Heart left ventricle (tissue), 16 donors: ENCODE measurements at regions of chr18 and their contacts with region 1.

Region 1: DNA sequence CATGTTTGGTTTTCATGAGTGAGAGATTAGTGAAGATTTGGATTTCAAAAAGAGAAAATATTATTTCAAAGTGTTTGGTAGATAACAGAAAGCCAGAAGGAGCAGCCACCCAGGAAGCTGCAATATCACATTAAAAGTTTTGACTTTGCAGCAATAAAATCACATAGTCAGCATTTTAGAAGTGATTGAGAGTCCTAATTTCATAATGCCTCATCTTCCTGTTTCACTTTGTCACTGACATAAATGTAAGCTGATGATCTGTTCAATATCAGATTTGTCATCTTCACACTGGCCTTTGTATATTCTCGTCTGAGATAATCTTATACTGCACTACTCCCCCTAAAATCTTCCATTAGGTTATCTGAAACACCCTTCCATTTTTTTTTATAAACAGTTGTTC is 690.5 kb downstream of the ADCYAP1 start:
- DNase-seq: no peak
- ATAC-seq: no peak
- H3K4me3 ChIP-seq: no peak overlapping the region
- H3K27ac ChIP-seq: no peak overlapping the region
- H3K4me1 ChIP-seq: no peaks in the 10 kb centered on the region
- H3K27me3 ChIP-seq: no peaks in the 10 kb centered on the region
- CTCF ChIP-seq: no peak
- POLR2A ChIP-seq: no peak

Region 2: GRCh38 chr18:1526991-1527390 is 68.2 kb before region 1 on chr18:
- intact Hi-C with region 1: no loop called
- DNase-seq: no peak
- ATAC-seq: no peak
- H3K4me3 ChIP-seq: no peak overlapping the region
- H3K27ac ChIP-seq: no peak overlapping the region
- H3K4me1 ChIP-seq: no peaks in the 10 kb centered on the region
- H3K27me3 ChIP-seq: no peaks in the 10 kb centered on the region
- CTCF ChIP-seq: no peak
- POLR2A ChIP-seq: no peak

Region 3: GRCh38 chr18:1663879-1664705 is 68.9 kb after region 1 on chr18:
- intact Hi-C with region 1: loop called in 1 of 10 experiments (anchors 10 kb)
- DNase-seq: peak; percentile 22 to 70 (median 37)
- ATAC-seq: peak in 2 of 4 donors; percentile 13 to 53
- H3K4me3 ChIP-seq: no peak overlapping the region
- H3K27ac ChIP-seq: peak overlapping the region in 1 of 12 donors; percentile 31
- H3K4me1 ChIP-seq: peaks cover 0 to 4% (median 0%) of the 10 kb centered on the region in 12 donors
- H3K27me3 ChIP-seq: no peaks in the 10 kb centered on the region
- CTCF ChIP-seq: peak in 11 of 12 donors; percentile 12 to 66 (median 44)
- POLR2A ChIP-seq: no peak

Region 4: DNA sequence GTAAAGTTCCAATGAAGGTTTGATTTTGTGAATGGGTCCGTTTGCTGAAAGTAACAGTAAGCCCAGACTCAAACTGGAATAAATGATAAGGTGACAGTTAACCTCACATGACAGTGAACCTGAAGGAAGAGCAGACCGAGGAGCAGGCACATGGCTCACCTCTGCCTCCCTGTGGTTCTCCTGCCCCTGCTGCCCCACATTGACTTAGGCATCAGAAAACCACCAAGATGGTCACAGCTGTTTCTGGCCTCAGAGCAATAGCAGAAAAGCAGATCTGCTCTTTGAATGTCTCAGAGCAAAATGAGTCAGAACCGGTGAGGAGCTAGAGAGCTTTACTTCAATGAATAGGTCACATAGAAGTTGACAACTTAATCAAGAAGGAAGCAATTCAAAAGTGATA is 488.5 kb after region 1 on chr18:
- intact Hi-C with region 1: loop called in 1 of 10 experiments (anchors 5 kb)
- DNase-seq: no peak
- ATAC-seq: no peak
- H3K4me3 ChIP-seq: no peak overlapping the region
- H3K27ac ChIP-seq: no peak overlapping the region
- H3K4me1 ChIP-seq: peaks cover 0 to 8% (median 0%) of the 10 kb centered on the region in 12 donors
- H3K27me3 ChIP-seq: no peaks in the 10 kb centered on the region
- CTCF ChIP-seq: peak in 6 of 12 donors; percentile 11 to 31 (median 19)
- POLR2A ChIP-seq: no peak

Region 5: DNA sequence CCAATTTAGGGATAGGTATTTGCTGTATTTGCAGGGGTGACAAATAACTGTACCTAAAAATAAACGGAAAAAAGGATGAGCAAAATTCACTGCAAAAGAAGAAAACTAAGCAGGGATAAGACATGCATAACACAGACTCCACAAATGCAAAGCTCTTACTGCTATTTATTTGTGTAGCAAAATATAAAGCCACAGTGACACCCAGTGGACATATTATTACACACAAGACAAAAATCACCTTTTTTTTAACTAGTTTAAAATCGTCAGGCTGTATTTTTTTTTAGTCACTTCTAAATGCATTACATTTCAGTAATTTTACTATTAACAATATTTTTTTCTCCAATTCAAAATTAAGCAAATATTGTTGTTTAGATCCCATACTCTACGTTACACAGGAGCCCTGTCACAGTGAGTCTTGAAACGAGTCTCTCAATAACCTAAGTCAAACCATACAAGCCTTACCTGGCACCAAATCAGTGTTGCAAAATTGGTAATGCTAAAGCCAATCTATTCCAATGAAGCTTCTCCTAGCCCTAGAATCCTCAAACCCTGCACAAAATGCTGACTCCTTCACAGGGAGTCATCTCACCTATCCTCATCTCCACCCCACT is 952.4 kb after region 1 on chr18:
- intact Hi-C with region 1: loop called in 1 of 10 experiments (anchors 5 kb)
- DNase-seq: no peak
- ATAC-seq: no peak
- H3K4me3 ChIP-seq: no peak overlapping the region
- H3K27ac ChIP-seq: no peak overlapping the region
- H3K4me1 ChIP-seq: no peaks in the 10 kb centered on the region
- H3K27me3 ChIP-seq: no peaks in the 10 kb centered on the region
- CTCF ChIP-seq: peak; percentile 38 to 71 (median 53)
- POLR2A ChIP-seq: no peak